ENCODE measurements at regions of chr3 and their contacts with region 1.

Region 1: DNA sequence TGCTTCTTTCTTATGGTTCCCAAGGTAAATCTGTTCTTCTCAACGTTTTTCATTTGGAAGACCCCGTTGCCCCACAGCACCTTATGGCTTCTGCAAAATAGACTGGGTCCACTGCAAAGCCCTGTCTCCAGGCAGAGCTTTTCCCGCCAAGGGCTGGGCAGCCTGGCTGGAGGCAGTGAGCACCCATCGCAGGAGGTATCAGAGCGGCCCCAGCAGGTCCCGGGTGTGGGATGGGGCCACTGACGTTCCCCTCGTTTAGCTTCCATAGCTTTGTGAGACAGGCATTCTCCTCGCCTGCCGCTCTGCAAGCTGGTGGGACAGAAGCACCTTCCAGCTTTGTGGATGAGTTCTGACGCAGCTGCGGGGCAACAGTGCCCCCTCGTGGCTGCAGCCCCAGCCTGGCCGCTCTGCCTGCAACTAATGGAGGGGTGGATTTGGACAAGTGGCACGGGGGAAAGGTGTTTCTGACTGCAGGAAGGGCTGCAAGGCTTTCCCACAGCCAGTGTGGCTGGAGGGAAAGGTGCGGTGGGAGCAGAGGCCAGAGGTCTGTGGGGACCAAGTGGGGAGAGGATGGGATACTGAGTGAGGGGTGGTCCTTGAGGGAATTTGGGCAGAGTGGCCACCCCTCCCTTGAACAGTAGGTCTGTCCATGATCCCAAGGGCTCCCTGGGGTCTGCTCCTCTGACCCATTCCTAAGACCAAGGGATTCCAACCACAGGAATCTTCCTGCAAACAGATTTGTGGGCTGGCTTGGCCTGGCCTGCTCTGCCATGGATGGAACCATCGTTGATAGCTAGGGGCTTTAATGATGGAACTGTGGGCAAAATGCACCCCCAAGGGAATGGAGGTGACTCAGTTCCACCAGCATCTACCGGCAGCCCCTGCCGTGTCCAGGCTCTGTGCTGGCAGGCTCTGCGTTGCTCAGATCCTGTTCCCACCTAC is 99.4 kb downstream of the FBLN2 start:
- DNase-seq: peak; percentile 50 to 82 (median 72)
- ATAC-seq: peak; percentile 62
- H3K4me3 ChIP-seq: no peak overlapping the region
- H3K4me3 Mint-ChIP-seq: peak overlapping the region in 7 of 10 donors; percentile 17 to 64 (median 41)
- H3K27ac ChIP-seq: no peak overlapping the region
- H3K27ac Mint-ChIP-seq: peak overlapping the region in 2 of 9 donors; percentile 57 to 87
- H3K4me1 ChIP-seq: peaks cover 9 to 12% of the 10 kb centered on the region in 2 donors
- H3K4me1 Mint-ChIP-seq: peaks cover 14 to 40% (median 23%) of the 10 kb centered on the region in 7 donors
- H3K27me3 ChIP-seq: no peaks in the 10 kb centered on the region
- H3K27me3 Mint-ChIP-seq: peaks cover 15 to 48% (median 20%) of the 10 kb centered on the region in 5 donors

Region 2: DNA sequence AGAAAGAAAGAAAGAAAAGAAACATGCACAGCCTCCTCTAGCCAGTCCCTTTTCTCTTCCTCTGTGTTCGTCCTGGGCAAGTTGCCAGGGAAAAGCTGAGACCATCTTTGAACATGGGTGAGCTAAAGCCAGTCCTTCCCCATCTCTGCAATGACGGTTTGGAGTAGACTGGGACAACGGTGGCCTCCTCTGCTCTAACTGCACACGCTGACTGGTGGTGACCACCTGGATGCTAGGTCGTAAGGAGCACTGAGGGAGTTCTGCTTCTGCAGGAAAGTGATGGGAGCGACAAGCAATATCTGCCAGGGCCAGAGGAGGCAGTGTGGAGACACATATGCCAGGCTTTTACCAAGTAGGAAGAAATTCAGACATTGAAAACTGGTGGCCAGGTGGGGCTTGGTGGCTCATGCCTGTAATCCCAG is 339.9 kb before region 1 on chr3:
- CTCF ChIA-PET with region 1: interaction called, 5 read pairs
- POLR2A ChIA-PET with region 1: no interaction called
- intact Hi-C with region 1: loop called in 1 of 2 experiments (anchors 5 kb)
- DNase-seq: peak in 5 of 9 donors; percentile 21 to 40 (median 34)
- ATAC-seq: peak; percentile 68
- H3K4me3 ChIP-seq: no peak overlapping the region
- H3K4me3 Mint-ChIP-seq: no peak overlapping the region
- H3K27ac ChIP-seq: no peak overlapping the region
- H3K27ac Mint-ChIP-seq: peak overlapping the region in 6 of 9 donors; percentile 12 to 82 (median 24)
- H3K4me1 ChIP-seq: no peaks in the 10 kb centered on the region
- H3K4me1 Mint-ChIP-seq: peaks cover 0 to 9% (median 7%) of the 10 kb centered on the region in 7 donors
- H3K27me3 ChIP-seq: no peaks in the 10 kb centered on the region
- H3K27me3 Mint-ChIP-seq: no peaks in the 10 kb centered on the region

Region 3: GRCh38 chr3:13495921-13496723 is 152.2 kb before region 1 on chr3:
- CTCF ChIA-PET with region 1: interaction called, 135 read pairs
- POLR2A ChIA-PET with region 1: interaction called, 5 read pairs
- intact Hi-C with region 1: loop called (anchors 1 kb)
- DNase-seq: peak; percentile 47 to 73 (median 66)
- ATAC-seq: peak; percentile 89
- H3K4me3 ChIP-seq: no peak overlapping the region
- H3K4me3 Mint-ChIP-seq: no peak overlapping the region
- H3K27ac ChIP-seq: no peak overlapping the region
- H3K27ac Mint-ChIP-seq: no peak overlapping the region
- H3K4me1 ChIP-seq: no peaks in the 10 kb centered on the region
- H3K4me1 Mint-ChIP-seq: peaks cover 0 to 7% (median 3%) of the 10 kb centered on the region in 7 donors
- H3K27me3 ChIP-seq: no peaks in the 10 kb centered on the region
- H3K27me3 Mint-ChIP-seq: no peaks in the 10 kb centered on the region

Region 4: GRCh38 chr3:14144423-14145075 is 496.2 kb after region 1 on chr3:
- CTCF ChIA-PET with region 1: no interaction called
- POLR2A ChIA-PET with region 1: interaction called, 3 read pairs
- intact Hi-C with region 1: loop called in 1 of 2 experiments (anchors 10 kb)
- DNase-seq: peak; percentile 45 to 93 (median 84)
- ATAC-seq: peak; percentile 75
- H3K4me3 ChIP-seq: peak overlapping the region; percentile 10
- H3K4me3 Mint-ChIP-seq: peak overlapping the region; percentile 53 to 76 (median 66)
- H3K27ac ChIP-seq: peak overlapping the region; percentile 79
- H3K27ac Mint-ChIP-seq: peak overlapping the region; percentile 89 to 100 (median 98)
- H3K4me1 ChIP-seq: peaks cover 50 to 52% of the 10 kb centered on the region in 2 donors
- H3K4me1 Mint-ChIP-seq: peaks cover 34 to 62% (median 56%) of the 10 kb centered on the region in 7 donors
- H3K27me3 ChIP-seq: no peaks in the 10 kb centered on the region
- H3K27me3 Mint-ChIP-seq: no peaks in the 10 kb centered on the region

Measured in naive thymus-derived CD4-positive, alpha-beta T cell (primary cell).